Naive thymus-derived CD4-positive, alpha-beta T cell (primary cell): ENCODE measurements at regions of chr3 and their contacts with region 1.

Region 1: DNA sequence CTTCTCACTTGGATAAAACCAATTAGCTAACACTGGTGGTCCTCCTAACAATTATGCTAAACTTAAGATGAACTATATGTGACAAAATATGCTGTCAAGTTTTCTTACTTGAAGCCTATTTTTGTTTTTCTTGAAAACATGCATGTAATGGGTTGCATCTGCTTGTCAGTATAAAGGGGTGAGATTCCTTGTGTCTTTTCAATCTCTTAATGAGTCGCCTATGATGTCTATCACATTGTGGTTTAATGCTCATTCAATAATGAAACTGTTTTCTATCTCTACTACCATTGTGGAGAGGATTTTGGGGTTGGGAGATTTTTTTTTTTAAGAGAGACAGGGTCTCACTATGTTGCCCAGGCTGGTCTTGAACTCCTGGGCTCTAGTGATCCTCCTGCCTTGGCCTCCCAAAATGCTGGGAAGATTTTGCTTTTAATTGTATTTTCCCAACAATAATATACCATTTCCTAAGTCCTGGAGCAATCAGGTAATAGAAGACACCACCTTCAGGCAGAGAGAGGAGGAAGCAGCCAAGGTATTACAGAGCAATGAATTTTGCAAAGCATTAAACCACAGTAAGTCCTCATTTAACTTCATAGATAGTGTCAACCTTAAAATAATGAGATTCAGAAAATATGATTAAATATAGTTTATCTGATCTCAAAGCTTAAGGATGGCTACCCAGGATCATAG is 17.4 kb upstream of the TRMT10C start:
- DNase-seq: peak in 1 of 9 donors; percentile 10
- ATAC-seq: no peak
- H3K4me3 ChIP-seq: no peak overlapping the region
- H3K4me3 Mint-ChIP-seq: peak overlapping the region in 9 of 10 donors; percentile 1 to 77 (median 36)
- H3K27ac ChIP-seq: peak overlapping the region; percentile 20
- H3K27ac Mint-ChIP-seq: peak overlapping the region; percentile 51 to 95 (median 89)
- H3K4me1 ChIP-seq: peaks cover 20 to 25% of the 10 kb centered on the region in 2 donors
- H3K4me1 Mint-ChIP-seq: peaks cover 17 to 40% (median 31%) of the 10 kb centered on the region in 7 donors
- H3K27me3 ChIP-seq: no peaks in the 10 kb centered on the region
- H3K27me3 Mint-ChIP-seq: no peaks in the 10 kb centered on the region

Region 2: DNA sequence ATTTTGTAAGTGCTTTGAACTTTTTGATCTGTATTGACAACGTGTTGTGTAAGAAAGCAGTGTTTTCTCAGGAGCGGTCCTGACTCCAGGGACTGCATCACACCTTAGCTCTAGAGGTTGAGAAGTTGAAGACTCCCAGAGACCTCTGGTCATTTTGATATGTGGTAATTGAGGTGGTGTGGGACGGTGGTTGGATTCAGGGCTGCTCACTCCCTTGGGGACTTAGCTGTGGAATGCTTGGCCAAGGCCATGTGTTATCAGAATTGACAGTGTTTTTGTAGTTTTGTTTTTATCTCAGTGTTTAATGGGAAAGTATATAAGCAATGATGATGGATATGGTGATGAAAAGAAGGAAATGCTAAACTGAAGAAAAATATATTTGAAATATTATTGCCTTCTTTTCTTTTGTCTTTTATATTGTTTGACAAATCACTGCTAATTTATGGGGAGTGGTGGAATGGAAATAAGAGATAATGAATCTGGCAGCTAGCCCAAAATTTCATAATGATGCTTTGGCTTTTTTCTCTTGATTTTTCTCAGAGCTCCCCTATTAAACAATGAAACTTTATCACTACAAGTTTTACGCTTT is 1710.6 kb before region 1 on chr3:
- CTCF ChIA-PET with region 1: no interaction called
- POLR2A ChIA-PET with region 1: no interaction called
- intact Hi-C with region 1: no loop called
- DNase-seq: no peak
- ATAC-seq: no peak
- H3K4me3 ChIP-seq: no peak overlapping the region
- H3K4me3 Mint-ChIP-seq: no peak overlapping the region
- H3K27ac ChIP-seq: no peak overlapping the region
- H3K27ac Mint-ChIP-seq: no peak overlapping the region
- H3K4me1 ChIP-seq: no peaks in the 10 kb centered on the region
- H3K4me1 Mint-ChIP-seq: peaks cover 0 to 11% (median 4%) of the 10 kb centered on the region in 7 donors
- H3K27me3 ChIP-seq: no peaks in the 10 kb centered on the region
- H3K27me3 Mint-ChIP-seq: no peaks in the 10 kb centered on the region

Region 3: GRCh38 chr3:101381809-101382208 is 162.5 kb before region 1 on chr3:
- CTCF ChIA-PET with region 1: interaction called, 3 read pairs
- POLR2A ChIA-PET with region 1: no interaction called
- intact Hi-C with region 1: loop called in 1 of 2 experiments (anchors 1 kb)
- DNase-seq: peak in 6 of 9 donors; percentile 10 to 42 (median 24)
- ATAC-seq: peak; percentile 69
- H3K4me3 ChIP-seq: no peak overlapping the region
- H3K4me3 Mint-ChIP-seq: no peak overlapping the region
- H3K27ac ChIP-seq: no peak overlapping the region
- H3K27ac Mint-ChIP-seq: peak overlapping the region in 1 of 9 donors; percentile 40
- H3K4me1 ChIP-seq: no peaks in the 10 kb centered on the region
- H3K4me1 Mint-ChIP-seq: peaks cover 31 to 89% (median 73%) of the 10 kb centered on the region in 7 donors
- H3K27me3 ChIP-seq: no peaks in the 10 kb centered on the region
- H3K27me3 Mint-ChIP-seq: no peaks in the 10 kb centered on the region

Region 4: DNA sequence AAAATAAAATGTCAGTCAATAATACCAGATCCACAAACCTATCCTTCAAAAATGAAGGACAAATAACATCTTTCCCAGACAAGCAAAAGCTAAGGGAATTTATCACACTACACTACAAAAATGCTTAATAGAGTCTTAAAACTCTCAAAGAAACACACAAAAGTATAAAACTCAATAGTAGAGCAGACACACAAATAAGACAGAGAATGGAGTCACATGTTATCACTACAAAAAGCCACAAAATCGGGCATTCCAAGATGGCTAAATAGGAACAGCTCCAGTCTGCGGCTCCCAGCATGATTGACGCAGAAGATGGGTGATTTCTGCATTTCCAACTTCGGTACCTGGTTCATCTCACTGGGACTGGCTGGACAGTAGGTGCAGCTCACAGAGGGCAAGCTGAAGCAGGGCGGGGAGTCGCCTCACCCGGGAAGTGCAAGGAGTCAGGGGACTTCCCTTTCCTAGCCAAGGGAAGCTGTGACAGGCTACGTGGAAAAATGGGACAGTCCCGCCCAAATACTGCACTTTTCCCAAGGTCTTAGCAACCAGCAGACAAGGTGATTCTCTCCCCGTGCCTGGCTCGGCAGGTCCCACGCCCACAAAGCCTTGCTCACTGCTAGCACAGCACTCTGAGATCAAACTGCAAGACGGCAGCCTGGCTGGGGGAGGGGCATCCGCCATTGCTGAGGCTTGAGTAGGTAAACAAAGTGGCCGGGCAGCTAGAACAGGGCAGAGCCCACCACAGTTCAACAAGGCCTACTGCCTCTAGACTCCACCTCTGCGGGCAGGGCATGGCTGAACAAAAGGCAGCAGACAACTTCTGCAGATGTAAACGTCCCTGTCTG is 77.6 kb before region 1 on chr3:
- CTCF ChIA-PET with region 1: no interaction called
- POLR2A ChIA-PET with region 1: no interaction called
- intact Hi-C with region 1: loop called in 1 of 2 experiments (anchors 1 kb)
- DNase-seq: peak in 8 of 9 donors; percentile 38 to 82 (median 58)
- ATAC-seq: peak; percentile 67
- H3K4me3 ChIP-seq: no peak overlapping the region
- H3K4me3 Mint-ChIP-seq: peak overlapping the region in 8 of 10 donors; percentile 4 to 86 (median 76)
- H3K27ac ChIP-seq: peak overlapping the region; percentile 63
- H3K27ac Mint-ChIP-seq: peak overlapping the region in 8 of 9 donors; percentile 52 to 96 (median 89)
- H3K4me1 ChIP-seq: peaks cover 3 to 17% of the 10 kb centered on the region in 2 donors
- H3K4me1 Mint-ChIP-seq: peaks cover 38 to 81% (median 72%) of the 10 kb centered on the region in 7 donors
- H3K27me3 ChIP-seq: no peaks in the 10 kb centered on the region
- H3K27me3 Mint-ChIP-seq: no peaks in the 10 kb centered on the region

Region 5: GRCh38 chr3:101512646-101513418 is 31.5 kb before region 1 on chr3 and contains the start of gene SENP7:
- CTCF ChIA-PET with region 1: no interaction called
- POLR2A ChIA-PET with region 1: interaction called, 29 read pairs
- intact Hi-C with region 1: loop called (anchors 1 kb)
- DNase-seq: peak; percentile 55 to 82 (median 76)
- ATAC-seq: peak; percentile 74
- H3K4me3 ChIP-seq: peak within 1 kb of the TSS; percentile 84
- H3K4me3 Mint-ChIP-seq: peak within 1 kb of the TSS; percentile 98 to 100 (median 100)
- H3K27ac ChIP-seq: peak within 1 kb of the TSS; percentile 92
- H3K27ac Mint-ChIP-seq: peak within 1 kb of the TSS; percentile 96 to 100 (median 98)
- H3K4me1 ChIP-seq: peaks cover 24 to 41% of the 10 kb centered on the region in 2 donors
- H3K4me1 Mint-ChIP-seq: peaks cover 35 to 79% (median 70%) of the 10 kb centered on the region in 7 donors
- H3K27me3 ChIP-seq: no peaks in the 10 kb centered on the region
- H3K27me3 Mint-ChIP-seq: peaks cover 0 to 4% (median 0%) of the 10 kb centered on the region in 5 donors
- total RNA-seq, gene SENP7: 28.8 to 79.0 (median 49.5) TPM

Region 6: GRCh38 chr3:101685870-101686412 is 141.6 kb after region 1 on chr3:
- CTCF ChIA-PET with region 1: no interaction called
- POLR2A ChIA-PET with region 1: no interaction called
- intact Hi-C with region 1: no loop called
- DNase-seq: peak in 2 of 9 donors; percentile 21 to 24
- ATAC-seq: peak; percentile 1
- H3K4me3 ChIP-seq: peak overlapping the region; percentile 72
- H3K4me3 Mint-ChIP-seq: peak overlapping the region; percentile 90 to 100 (median 98)
- H3K27ac ChIP-seq: peak overlapping the region; percentile 92
- H3K27ac Mint-ChIP-seq: peak overlapping the region; percentile 94 to 100 (median 99)
- H3K4me1 ChIP-seq: peaks cover 24 to 25% of the 10 kb centered on the region in 2 donors
- H3K4me1 Mint-ChIP-seq: peaks cover 20 to 58% (median 41%) of the 10 kb centered on the region in 7 donors
- H3K27me3 ChIP-seq: no peaks in the 10 kb centered on the region
- H3K27me3 Mint-ChIP-seq: no peaks in the 10 kb centered on the region

Region 7: GRCh38 chr3:102006812-102007485 is 462.6 kb after region 1 on chr3:
- CTCF ChIA-PET with region 1: no interaction called
- POLR2A ChIA-PET with region 1: no interaction called
- intact Hi-C with region 1: no loop called
- DNase-seq: no peak
- ATAC-seq: no peak
- H3K4me3 ChIP-seq: no peak overlapping the region
- H3K4me3 Mint-ChIP-seq: no peak overlapping the region
- H3K27ac ChIP-seq: no peak overlapping the region
- H3K27ac Mint-ChIP-seq: no peak overlapping the region
- H3K4me1 ChIP-seq: no peaks in the 10 kb centered on the region
- H3K4me1 Mint-ChIP-seq: peaks cover 0 to 3% (median 0%) of the 10 kb centered on the region in 7 donors
- H3K27me3 ChIP-seq: no peaks in the 10 kb centered on the region
- H3K27me3 Mint-ChIP-seq: peaks cover 0 to 6% (median 0%) of the 10 kb centered on the region in 5 donors